Calu3 (cell line): ENCODE measurements at regions of chr11 and their contacts with region 1.

Region 1: DNA sequence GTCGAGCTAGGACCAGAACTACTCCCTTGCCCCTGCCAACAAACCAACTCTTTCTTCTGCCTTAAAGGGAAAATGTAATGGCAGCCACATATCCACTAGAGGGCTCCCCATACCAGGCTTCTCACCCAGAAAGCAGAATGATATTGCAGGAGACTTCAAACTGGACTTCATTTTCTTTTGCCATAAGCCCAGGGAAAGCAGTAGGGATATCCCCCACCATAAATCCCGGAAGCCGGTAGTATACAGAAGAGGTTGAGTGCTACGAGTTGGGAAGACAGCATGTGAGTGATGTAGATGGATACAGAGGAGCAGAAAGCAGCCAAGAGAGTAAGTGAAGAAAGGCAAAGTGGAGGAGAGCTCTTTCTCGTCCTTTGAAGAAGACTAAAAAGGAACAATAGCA is 12.1 kb downstream of the PLAAT5 start:
- DNase-seq: peak; percentile 69
- H3K4me3 Mint-ChIP-seq: no peak overlapping the region
- H3K27ac Mint-ChIP-seq: no peak overlapping the region
- H3K4me1 Mint-ChIP-seq: peaks cover 40% of the 10 kb centered on the region
- H3K27me3 Mint-ChIP-seq: no peaks in the 10 kb centered on the region
- CTCF ChIP-seq: peak; percentile 80

Region 2: DNA sequence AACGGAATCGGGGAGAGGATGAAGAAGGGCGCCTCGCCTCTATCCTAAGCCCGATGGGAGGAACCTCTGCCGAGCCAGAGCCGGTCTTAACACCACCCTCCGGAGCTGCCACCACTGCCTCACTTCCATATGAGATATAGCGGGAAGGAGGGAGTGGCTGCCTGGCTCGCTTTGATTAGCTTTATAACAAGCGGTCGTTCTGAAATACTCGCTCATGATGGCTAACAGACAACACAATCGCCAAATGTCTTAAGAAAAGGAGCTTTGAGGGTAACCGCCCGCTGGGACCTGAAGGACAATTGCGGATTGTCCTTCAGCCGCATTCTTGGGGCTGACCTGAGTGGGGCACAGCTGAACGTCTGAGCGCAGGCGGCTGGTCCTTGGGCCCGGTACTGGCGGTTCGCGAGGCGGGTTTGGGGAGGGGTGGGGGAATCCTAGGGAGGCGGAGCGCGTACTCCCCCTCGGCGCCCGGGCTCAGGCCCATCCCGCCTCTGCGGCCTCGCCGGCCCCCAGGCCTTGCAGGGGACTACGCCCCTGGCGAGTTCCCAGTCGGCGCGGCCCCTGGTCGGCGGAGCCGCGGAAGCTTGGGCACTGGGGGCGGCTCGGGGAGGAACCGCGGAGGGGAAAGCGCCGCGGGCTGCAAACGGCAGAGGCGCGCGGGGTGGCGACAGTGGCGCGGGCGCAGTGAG is 11.8 kb after region 1 on chr11 and contains the start of gene PLAAT5:
- CTCF ChIA-PET with region 1: interaction called, 20 read pairs
- intact Hi-C with region 1: no loop called
- DNase-seq: peak; percentile 24
- H3K4me3 Mint-ChIP-seq: peak within 1 kb of the TSS; percentile 86
- H3K27ac Mint-ChIP-seq: no peak within 1 kb of the TSS
- H3K4me1 Mint-ChIP-seq: peaks cover 52% of the 10 kb centered on the region
- H3K27me3 Mint-ChIP-seq: no peaks in the 10 kb centered on the region
- CTCF ChIP-seq: no peak
- total RNA-seq, gene PLAAT5: 0.42 and 0.57 TPM in 2 replicates

Region 3: GRCh38 chr11:63508009-63508408 is 29.1 kb after region 1 on chr11:
- CTCF ChIA-PET with region 1: interaction called, 10 read pairs
- intact Hi-C with region 1: loop called (anchors 1 kb)
- DNase-seq: peak; percentile 72
- H3K4me3 Mint-ChIP-seq: no peak overlapping the region
- H3K27ac Mint-ChIP-seq: no peak overlapping the region
- H3K4me1 Mint-ChIP-seq: peaks cover 32% of the 10 kb centered on the region
- H3K27me3 Mint-ChIP-seq: no peaks in the 10 kb centered on the region
- CTCF ChIP-seq: peak; percentile 14

Region 4: GRCh38 chr11:63536669-63537292 is 57.9 kb after region 1 on chr11 and contains the start of gene PLAAT4:
- CTCF ChIA-PET with region 1: interaction called, 5 read pairs
- intact Hi-C with region 1: loop called (anchors 1 kb)
- DNase-seq: peak; percentile 29
- H3K4me3 Mint-ChIP-seq: peak within 1 kb of the TSS; percentile 71
- H3K27ac Mint-ChIP-seq: peak within 1 kb of the TSS; percentile 37
- H3K4me1 Mint-ChIP-seq: peaks cover 43% of the 10 kb centered on the region
- H3K27me3 Mint-ChIP-seq: no peaks in the 10 kb centered on the region
- CTCF ChIP-seq: no peak
- total RNA-seq, gene PLAAT4: 157 and 269 TPM in 2 replicates

Region 5: DNA sequence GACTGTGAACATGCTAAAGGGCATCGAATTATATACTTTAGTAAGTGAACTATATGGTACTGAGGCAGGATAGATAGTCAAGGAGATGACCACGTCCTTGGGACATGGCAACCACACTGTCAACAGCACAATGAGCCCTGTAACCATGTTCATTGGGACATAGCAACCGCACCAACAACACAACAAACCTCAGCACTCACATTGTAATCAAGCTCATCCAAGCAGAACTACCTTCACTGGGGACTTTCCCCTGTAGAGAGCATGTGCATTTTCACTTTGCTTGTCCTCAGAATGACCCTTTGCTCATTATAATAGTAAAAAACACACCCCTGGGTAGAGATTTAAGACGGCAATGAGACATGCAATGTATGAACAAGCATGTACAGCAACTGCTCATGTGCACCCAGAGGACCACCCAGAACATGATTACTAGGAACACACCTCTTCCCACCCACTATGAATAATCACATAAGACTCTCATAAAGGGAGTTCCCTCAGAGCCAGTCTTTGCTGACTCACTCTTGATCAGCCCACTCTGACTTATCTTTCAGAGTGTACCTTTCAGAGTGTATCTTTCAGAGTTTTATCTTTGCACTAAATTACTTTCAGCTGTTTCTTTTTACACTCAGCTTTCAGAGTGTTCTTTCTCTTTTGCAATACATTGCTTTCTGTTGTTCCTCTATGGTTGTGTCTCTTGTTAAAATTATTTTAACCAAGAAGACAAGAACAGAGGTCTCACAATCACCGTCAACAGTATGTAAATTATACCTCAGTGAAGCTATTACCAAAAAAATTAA is 88.3 kb after region 1 on chr11:
- CTCF ChIA-PET with region 1: interaction called, 4 read pairs
- intact Hi-C with region 1: loop called (anchors 2 kb)
- DNase-seq: peak; percentile 62
- H3K4me3 Mint-ChIP-seq: peak overlapping the region; percentile 17
- H3K27ac Mint-ChIP-seq: peak overlapping the region; percentile 61
- H3K4me1 Mint-ChIP-seq: peaks cover 65% of the 10 kb centered on the region
- H3K27me3 Mint-ChIP-seq: no peaks in the 10 kb centered on the region
- CTCF ChIP-seq: no peak

Region 6: DNA sequence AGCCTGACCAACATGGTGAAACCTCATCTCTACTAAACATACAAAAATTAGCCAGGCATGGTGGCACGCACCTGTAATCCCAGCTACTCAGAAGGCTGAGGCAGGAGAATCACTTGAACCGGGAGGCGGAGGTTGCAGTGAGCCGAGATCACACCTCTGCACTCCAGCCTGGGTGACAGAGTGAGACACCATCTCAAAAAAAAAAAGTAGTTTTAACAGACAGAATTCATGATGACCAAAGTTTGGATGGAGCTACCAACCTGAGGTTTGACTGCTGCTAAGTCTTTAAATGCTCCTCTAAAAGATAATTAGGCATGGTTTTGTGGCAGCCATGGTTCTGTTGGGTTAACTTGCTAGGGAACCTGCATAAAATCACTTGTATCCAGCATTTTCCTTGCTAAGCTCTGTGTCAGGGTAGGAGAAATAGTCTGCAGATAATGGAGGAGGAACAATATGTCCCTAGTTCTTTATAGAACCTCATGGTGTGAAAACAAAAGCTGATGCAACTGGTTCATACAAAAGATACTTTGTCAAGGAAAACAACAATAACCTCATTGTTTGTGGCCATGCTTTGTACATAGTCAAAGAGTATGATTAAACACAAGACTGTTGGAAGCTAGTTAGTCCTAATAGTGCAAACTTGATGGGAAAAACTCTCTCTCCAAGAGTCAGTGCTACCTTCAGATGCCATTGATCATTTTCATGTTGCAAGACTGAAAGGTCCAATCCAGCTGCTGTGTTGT is 104.2 kb after region 1 on chr11:
- CTCF ChIA-PET with region 1: interaction called, 6 read pairs
- intact Hi-C with region 1: loop called (anchors 5 kb)
- DNase-seq: no peak
- H3K4me3 Mint-ChIP-seq: no peak overlapping the region
- H3K27ac Mint-ChIP-seq: peak overlapping the region; percentile 86
- H3K4me1 Mint-ChIP-seq: peaks cover 34% of the 10 kb centered on the region
- H3K27me3 Mint-ChIP-seq: no peaks in the 10 kb centered on the region
- CTCF ChIP-seq: no peak